Activated CD4-positive, alpha-beta memory T cell treated with anti-CD3 and anti-CD28 coated beads for 36 hours (primary cell): ENCODE measurements at regions of chr10 and their contacts with region 1.

Region 1: GRCh38 chr10:133329491-133330202 is 7.0 kb downstream of the CALY start:
- DNase-seq: peak; percentile 90
- H3K4me3 Mint-ChIP-seq: peak overlapping the region; percentile 35
- H3K27ac Mint-ChIP-seq: no peak overlapping the region
- H3K4me1 Mint-ChIP-seq: peaks cover 7% of the 10 kb centered on the region
- H3K27me3 Mint-ChIP-seq: peaks cover 30% of the 10 kb centered on the region

Region 2: GRCh38 chr10:133261726-133262325 is 67.8 kb before region 1 on chr10:
- CTCF ChIA-PET with region 1: interaction called, 11 read pairs
- POLR2A ChIA-PET with region 1: no interaction called
- intact Hi-C with region 1: no loop called
- DNase-seq: peak; percentile 92
- H3K4me3 Mint-ChIP-seq: peak overlapping the region; percentile 79
- H3K27ac Mint-ChIP-seq: peak overlapping the region; percentile 90
- H3K4me1 Mint-ChIP-seq: peaks cover 76% of the 10 kb centered on the region
- H3K27me3 Mint-ChIP-seq: peaks cover 2% of the 10 kb centered on the region

Region 3: DNA sequence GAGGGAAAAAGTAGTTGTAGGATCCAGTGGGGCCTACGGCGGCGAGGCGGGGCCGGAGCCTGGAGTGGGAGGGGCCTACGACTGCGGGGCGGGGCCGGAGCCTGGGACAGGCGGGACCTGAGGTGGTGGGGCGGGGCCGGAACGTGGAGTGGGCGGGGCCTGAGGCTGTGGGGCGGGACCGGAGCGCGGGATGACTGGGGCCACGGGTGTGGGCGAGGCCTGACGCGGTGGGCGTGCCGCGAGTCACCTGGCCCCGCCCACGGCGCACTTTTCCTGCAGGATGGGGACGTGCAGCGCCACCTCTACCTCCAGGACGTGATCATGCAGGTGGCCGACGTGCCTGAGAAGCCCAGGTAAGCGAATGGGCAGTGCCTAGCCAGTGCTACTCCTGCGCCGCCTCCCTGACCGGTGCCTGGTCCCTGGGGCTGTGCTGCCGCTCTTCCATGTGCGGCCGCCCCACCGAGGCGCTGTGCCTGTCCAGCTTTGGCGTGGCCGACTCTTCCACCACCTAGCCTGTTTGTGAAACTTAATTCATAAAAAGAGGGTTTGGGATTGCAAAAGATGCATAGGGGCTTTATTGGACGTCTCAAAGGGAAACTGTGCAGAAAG is 20.4 kb before region 1 on chr10:
- CTCF ChIA-PET with region 1: interaction called, 30 read pairs
- POLR2A ChIA-PET with region 1: no interaction called
- intact Hi-C with region 1: no loop called
- DNase-seq: peak; percentile 96
- H3K4me3 Mint-ChIP-seq: peak overlapping the region; percentile 67
- H3K27ac Mint-ChIP-seq: peak overlapping the region; percentile 82
- H3K4me1 Mint-ChIP-seq: peaks cover 25% of the 10 kb centered on the region
- H3K27me3 Mint-ChIP-seq: no peaks in the 10 kb centered on the region

Region 4: DNA sequence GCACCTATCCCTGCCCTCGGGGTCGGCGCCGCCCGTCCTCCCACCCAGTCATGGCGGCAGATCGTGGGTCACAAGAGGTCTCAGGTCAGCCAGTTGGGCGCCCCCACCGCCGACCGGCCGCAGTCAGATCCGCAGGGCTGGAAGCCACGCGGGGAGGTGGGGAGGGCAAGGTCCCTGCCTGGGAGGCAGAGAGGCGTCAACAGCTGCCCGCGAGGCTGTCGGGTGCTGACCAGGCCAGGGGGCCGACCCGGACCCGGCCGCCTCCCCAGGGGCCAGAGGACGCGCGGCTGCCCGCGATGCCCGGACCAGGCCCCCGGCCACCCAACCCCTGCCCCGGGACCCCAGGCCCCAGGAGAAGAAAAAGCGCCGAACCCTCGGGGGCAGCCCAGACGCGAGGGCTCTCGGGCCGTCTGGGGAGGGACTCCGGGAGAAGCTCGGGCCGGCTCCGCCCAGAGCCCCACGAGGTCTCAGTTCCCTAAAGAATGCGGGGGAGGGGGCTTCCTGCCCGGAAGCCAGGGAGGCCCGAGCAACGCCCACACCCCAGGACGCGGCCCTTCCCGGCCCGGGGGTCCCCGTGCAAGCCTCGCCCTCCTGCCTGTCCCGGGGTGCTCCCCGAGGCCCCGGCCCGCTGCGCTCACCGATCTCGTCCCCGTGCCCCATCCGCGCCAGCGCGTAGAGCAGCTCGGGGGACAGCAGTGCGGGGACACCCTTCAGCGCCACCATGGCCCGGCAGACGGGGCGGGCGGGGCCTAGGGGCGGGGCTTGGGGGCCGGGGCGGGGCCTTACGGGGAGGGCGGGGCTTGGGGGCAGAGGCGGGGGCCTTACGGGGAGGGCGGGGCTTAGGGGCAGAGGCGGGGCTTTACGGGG is 27.9 kb after region 1 on chr10 and contains the start of gene FUOM:
- CTCF ChIA-PET with region 1: interaction called, 13 read pairs
- POLR2A ChIA-PET with region 1: no interaction called
- intact Hi-C with region 1: no loop called
- DNase-seq: peak; percentile 82
- H3K4me3 Mint-ChIP-seq: peak within 1 kb of the TSS; percentile 78
- H3K27ac Mint-ChIP-seq: peak within 1 kb of the TSS; percentile 69
- H3K4me1 Mint-ChIP-seq: peaks cover 3% of the 10 kb centered on the region
- H3K27me3 Mint-ChIP-seq: no peaks in the 10 kb centered on the region
- total RNA-seq, gene FUOM: 46.5 to 49.8 TPM

Region 5: DNA sequence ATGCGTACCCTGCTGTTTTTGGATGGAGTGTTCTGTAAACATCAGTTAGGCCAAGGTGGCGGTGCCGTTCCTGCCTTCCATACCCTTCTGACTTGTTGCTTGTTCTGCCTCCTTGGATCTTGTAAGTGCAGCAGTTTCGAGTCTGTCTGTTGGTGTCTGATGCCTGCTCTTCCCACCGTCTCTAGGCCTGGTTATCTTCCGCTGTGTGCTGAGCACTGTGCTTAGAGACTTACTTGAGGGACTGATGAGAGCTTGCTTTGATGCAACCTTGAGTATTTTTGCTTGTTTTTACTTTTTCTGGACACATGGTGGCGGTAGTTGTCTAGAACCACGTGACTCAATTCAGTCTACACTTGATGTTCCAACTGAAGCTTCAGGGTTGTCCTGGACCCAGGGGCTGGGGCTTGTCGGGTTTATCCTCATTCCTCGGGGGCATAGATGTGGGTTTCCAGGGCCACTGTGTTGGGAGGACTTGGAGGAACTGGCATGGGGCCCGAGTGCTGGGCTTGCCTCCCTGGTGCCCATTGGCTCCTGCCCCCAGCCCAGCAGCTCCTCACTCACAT is 109.1 kb after region 1 on chr10:
- CTCF ChIA-PET with region 1: interaction called, 20 read pairs
- POLR2A ChIA-PET with region 1: no interaction called
- intact Hi-C with region 1: no loop called
- DNase-seq: no peak
- H3K4me3 Mint-ChIP-seq: no peak overlapping the region
- H3K27ac Mint-ChIP-seq: no peak overlapping the region
- H3K4me1 Mint-ChIP-seq: peaks cover 31% of the 10 kb centered on the region
- H3K27me3 Mint-ChIP-seq: no peaks in the 10 kb centered on the region

Region 6: GRCh38 chr10:133520155-133520738 is 190.6 kb after region 1 on chr10:
- CTCF ChIA-PET with region 1: interaction called, 5 read pairs
- POLR2A ChIA-PET with region 1: no interaction called
- intact Hi-C with region 1: loop called (anchors 5 kb)
- DNase-seq: peak; percentile 95
- H3K4me3 Mint-ChIP-seq: peak overlapping the region; percentile 63
- H3K27ac Mint-ChIP-seq: peak overlapping the region; percentile 54
- H3K4me1 Mint-ChIP-seq: peaks cover 12% of the 10 kb centered on the region
- H3K27me3 Mint-ChIP-seq: peaks cover 3% of the 10 kb centered on the region